Activated CD4-positive, alpha-beta memory T cell treated with anti-CD3 and anti-CD28 coated beads for 36 hours (primary cell): ENCODE measurements at regions of chr14 and their contacts with region 1.

Region 1: GRCh38 chr14:97994020-97994531 is 1196.9 kb downstream of the VRK1 start:
- DNase-seq: peak; percentile 59
- H3K4me3 Mint-ChIP-seq: peak overlapping the region; percentile 34
- H3K27ac Mint-ChIP-seq: peak overlapping the region; percentile 94
- H3K4me1 Mint-ChIP-seq: peaks cover 55% of the 10 kb centered on the region
- H3K27me3 Mint-ChIP-seq: no peaks in the 10 kb centered on the region

Region 2: DNA sequence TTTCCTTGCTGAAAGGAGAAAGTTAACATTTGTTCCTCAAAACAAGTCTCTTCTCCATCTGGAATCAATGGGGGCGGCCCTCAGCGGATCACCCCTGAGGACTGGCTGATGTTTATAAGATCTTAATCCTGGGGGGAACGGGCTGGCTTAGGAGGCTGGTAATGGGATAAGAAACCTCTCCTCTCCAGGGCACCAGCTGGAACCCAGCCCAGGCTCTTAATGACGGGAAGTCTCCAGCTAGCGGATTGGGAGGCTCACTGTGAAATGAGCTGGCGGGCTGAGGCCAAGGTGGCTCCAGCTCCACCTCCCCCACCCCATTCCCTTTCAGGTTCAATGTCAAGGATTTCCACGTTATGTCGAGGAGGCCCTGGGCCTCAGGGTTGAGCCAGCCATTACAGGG is 63.9 kb before region 1 on chr14:
- CTCF ChIA-PET with region 1: no interaction called
- POLR2A ChIA-PET with region 1: no interaction called
- intact Hi-C with region 1: no loop called
- DNase-seq: no peak
- H3K4me3 Mint-ChIP-seq: no peak overlapping the region
- H3K27ac Mint-ChIP-seq: no peak overlapping the region
- H3K4me1 Mint-ChIP-seq: peaks cover 13% of the 10 kb centered on the region
- H3K27me3 Mint-ChIP-seq: no peaks in the 10 kb centered on the region

Region 3: DNA sequence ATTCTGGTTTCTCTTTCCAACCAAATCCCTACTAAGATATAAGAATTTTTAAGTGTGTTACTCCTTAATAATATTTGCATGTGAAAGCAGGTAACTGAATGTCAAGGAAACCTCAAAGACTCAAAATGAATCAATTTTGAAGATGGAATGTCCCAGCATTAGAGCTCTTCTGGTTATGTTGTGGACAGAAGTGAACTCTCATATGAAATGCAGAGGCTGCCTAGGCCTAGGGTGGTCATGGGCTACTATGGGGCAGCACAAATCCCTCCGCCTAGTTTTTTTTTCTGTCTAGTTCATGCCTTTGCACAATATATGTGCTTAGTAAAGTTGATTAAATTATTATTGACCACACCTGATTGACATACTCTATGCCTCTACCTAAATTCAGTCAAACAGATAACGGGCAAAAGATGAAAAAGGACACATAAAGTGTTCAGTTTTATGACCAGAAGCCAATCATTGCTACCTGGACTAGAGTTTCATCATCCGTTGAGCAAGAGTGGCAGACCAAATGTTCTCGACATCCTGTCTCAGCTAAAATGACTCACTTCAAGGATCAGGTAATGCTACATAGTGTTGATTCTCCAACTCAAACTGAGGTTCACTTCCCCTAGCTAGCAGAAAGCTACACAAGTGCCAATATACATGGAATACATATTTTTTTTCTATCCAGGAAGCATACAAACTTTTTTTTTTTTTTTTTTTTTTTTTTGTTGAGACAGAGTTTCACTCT is 14.5 kb after region 1 on chr14:
- CTCF ChIA-PET with region 1: no interaction called
- POLR2A ChIA-PET with region 1: no interaction called
- intact Hi-C with region 1: loop called (anchors 1 kb)
- DNase-seq: peak; percentile 33
- H3K4me3 Mint-ChIP-seq: no peak overlapping the region
- H3K27ac Mint-ChIP-seq: peak overlapping the region; percentile 76
- H3K4me1 Mint-ChIP-seq: peaks cover 28% of the 10 kb centered on the region
- H3K27me3 Mint-ChIP-seq: no peaks in the 10 kb centered on the region

Region 4: DNA sequence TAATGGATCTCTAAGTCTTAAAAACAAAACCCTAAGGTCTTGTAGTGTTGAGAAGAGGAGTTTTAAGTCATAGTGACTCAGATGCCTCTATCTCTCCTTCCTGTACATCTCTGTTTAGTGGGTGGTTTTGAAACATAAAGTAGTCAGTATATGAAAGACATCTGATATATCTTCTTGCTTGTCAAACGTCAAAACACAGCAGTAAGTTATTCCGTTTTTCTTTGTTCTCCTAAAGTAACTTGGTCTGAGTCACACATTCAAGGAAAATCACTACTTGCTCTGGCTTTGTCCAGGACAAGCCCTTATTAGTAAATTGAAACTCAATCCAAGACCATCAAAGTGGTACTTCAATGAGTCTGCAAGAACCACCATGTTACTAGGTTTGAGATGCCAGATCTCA is 105.5 kb after region 1 on chr14:
- CTCF ChIA-PET with region 1: no interaction called
- POLR2A ChIA-PET with region 1: no interaction called
- intact Hi-C with region 1: loop called (anchors 1 kb)
- DNase-seq: no peak
- H3K4me3 Mint-ChIP-seq: no peak overlapping the region
- H3K27ac Mint-ChIP-seq: peak overlapping the region; percentile 70
- H3K4me1 Mint-ChIP-seq: peaks cover 33% of the 10 kb centered on the region
- H3K27me3 Mint-ChIP-seq: no peaks in the 10 kb centered on the region